Right cardiac atrium (tissue), 5 donors: ENCODE measurements at regions of chr7 and their contacts with region 1.

Region 1: GRCh38 chr7:159030490-159031134 is 114.1 kb downstream of the VIPR2 start:
- DNase-seq: peak; percentile 67 to 86 (median 84)
- ATAC-seq: peak; percentile 74 to 76
- H3K4me3 ChIP-seq: peak overlapping the region; percentile 37
- H3K27ac ChIP-seq: peak overlapping the region; percentile 44
- H3K4me1 ChIP-seq: no peaks in the 10 kb centered on the region
- H3K27me3 ChIP-seq: no peaks in the 10 kb centered on the region

Region 2: GRCh38 chr7:159143780-159144757 is 113.5 kb after region 1 on chr7:
- intact Hi-C with region 1: loop called in 2 of 4 experiments (anchors 5 to 10 kb)
- DNase-seq: peak; percentile 56 to 80 (median 80)
- ATAC-seq: peak; percentile 61
- H3K4me3 ChIP-seq: peak overlapping the region; percentile 79
- H3K27ac ChIP-seq: no peak overlapping the region
- H3K4me1 ChIP-seq: no peaks in the 10 kb centered on the region
- H3K27me3 ChIP-seq: no peaks in the 10 kb centered on the region